ENCODE measurements at regions of chr2 and their contacts with region 1.

Region 1: DNA sequence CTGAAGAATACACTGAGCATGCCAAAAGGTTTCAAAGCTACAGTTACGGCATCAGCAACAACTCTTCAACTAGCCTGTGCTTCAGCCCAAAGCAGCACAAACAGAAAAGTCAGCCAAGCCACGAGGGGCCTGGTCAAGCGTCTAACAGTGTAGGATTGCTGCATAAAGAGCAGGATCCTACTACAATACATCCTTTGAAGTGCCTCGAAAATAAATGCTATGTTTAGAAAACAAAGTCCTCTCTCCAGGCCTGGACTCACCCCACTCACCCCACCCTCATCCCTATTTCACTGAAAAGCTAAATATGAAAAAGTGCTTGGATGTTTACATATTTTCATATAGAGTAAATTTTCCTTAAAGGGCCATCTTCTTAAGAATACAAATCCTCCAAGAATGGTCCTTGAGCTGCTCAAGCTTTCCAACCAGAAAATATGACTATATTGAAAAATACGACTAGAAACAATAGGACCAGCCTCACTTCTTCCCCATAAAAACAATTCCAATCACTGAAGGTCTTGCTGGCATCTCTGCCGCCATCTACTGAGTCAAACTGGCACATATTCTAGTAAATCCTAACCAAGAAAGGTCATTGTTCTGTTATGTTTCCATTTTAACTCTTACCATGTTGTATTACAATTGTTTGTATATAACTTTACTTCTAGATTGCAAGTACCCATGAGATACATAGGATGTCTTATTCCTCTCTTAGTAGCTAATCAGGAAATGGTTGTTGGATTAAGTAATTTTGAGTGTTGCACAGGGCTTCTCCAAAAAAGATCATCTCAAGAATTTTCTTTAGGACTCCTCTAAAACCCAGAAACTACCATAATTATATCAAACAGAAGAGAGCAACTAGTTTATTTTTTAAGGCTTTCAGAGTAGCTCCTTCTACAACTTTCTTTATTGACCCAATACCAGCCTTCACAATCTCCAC is 63.6 kb downstream of the CLHC1 start:
- DNase-seq: peak; percentile 69 to 77
- ATAC-seq: peak; percentile 81 to 84
- H3K4me3 ChIP-seq: no peak overlapping the region
- H3K27ac ChIP-seq: peak overlapping the region; percentile 12 to 59; a peak in 4 of 6 replicates
- H3K4me1 ChIP-seq: peaks cover 38% of the 10 kb centered on the region
- CTCF ChIP-seq: peak; percentile 98
- EP300 ChIP-seq: no peak
- POLR2A ChIP-seq: no peak
- RAD21 ChIP-seq: peak; percentile 98 to 99

Region 2: DNA sequence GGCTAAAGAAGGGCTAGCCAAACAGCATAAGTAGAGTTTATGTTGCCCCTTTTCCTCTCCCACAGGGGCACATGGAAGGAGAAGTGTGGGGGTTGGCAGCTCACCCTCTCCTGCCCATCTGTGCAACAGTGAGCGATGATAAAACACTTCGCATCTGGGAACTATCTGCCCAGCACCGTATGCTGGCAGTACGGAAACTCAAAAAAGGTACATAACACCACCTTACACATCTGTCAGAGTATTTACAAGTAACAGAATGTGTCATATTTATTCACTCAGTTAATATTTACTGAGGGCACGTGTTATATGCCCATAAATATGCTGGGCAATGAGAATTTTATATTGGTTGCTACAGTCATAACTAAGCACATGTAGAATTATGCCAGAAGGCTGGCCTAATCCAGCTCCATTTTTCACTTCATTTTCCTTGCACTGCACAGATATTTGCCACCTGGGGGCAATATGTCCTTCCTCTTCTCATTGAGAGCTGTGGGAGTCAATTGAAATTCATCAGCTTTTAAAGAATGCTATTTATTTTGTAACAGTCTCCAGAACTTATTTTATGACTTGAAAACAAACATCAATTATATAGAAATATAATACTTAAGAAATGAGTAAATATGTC is 268.8 kb before region 1 on chr2:
- CTCF ChIA-PET with region 1: interaction called, 236 read pairs
- POLR2A ChIA-PET with region 1: no interaction called
- DNase-seq: peak; percentile 35 to 58
- ATAC-seq: peak in 1 of 2 experiments; percentile 55; a peak in 3 of 6 replicates
- H3K4me3 ChIP-seq: no peak overlapping the region
- H3K27ac ChIP-seq: no peak overlapping the region
- H3K4me1 ChIP-seq: peaks cover 17% of the 10 kb centered on the region
- CTCF ChIP-seq: peak; percentile 75
- EP300 ChIP-seq: no peak
- POLR2A ChIP-seq: no peak
- RAD21 ChIP-seq: peak; percentile 90 to 93

Region 3: DNA sequence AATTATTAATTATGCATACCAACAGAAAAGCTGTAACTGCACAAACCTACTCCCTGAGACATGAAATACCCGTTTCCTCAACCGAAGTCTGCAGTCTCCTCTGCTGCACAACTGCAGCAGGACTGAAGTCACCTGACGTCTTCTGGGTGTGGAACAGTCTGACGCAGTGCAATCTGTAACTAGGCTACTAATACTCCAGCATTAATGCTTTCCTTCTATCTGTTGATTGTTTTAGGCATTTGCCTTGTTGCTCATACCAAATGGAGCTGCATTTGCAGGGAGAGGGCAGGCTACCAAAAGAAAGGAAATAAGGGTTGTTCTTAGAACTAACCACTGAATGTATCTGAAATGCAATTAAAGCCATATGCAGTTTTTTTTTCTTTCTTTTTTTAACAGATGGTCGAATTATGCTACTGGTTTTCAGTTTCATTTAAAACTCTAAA is 158.3 kb before region 1 on chr2:
- CTCF ChIA-PET with region 1: interaction called, 351 read pairs
- POLR2A ChIA-PET with region 1: interaction called, 3 read pairs
- DNase-seq: peak; percentile 26 to 67
- ATAC-seq: peak; percentile 76 to 81
- H3K4me3 ChIP-seq: peak overlapping the region; percentile 15; the same call in 2 of the 3 replicates
- H3K27ac ChIP-seq: peak overlapping the region; percentile 1 to 68; a peak in 4 of 6 replicates
- H3K4me1 ChIP-seq: peaks cover 94% of the 10 kb centered on the region
- CTCF ChIP-seq: no peak
- EP300 ChIP-seq: no peak
- POLR2A ChIP-seq: no peak
- RAD21 ChIP-seq: no peak

Region 4: GRCh38 chr2:55056024-55056521 is 112.4 kb before region 1 on chr2:
- CTCF ChIA-PET with region 1: interaction called, 198 read pairs
- POLR2A ChIA-PET with region 1: interaction called, 34 read pairs
- DNase-seq: peak; percentile 42 to 52
- ATAC-seq: peak in 1 of 2 experiments; percentile 60; a peak in 2 of 6 replicates
- H3K4me3 ChIP-seq: no peak overlapping the region
- H3K27ac ChIP-seq: peak overlapping the region; percentile 53 to 65; a peak in 5 of 6 replicates
- H3K4me1 ChIP-seq: peaks cover 26% of the 10 kb centered on the region
- CTCF ChIP-seq: no peak
- EP300 ChIP-seq: no peak
- POLR2A ChIP-seq: no peak
- RAD21 ChIP-seq: no peak

Region 5: GRCh38 chr2:55097461-55098410 is 70.8 kb before region 1 on chr2:
- CTCF ChIA-PET with region 1: interaction called, 12 read pairs
- POLR2A ChIA-PET with region 1: no interaction called
- DNase-seq: peak in 1 of 2 experiments; percentile 39
- ATAC-seq: peak; percentile 75 to 79
- H3K4me3 ChIP-seq: no peak overlapping the region
- H3K27ac ChIP-seq: peak overlapping the region; percentile 77 to 82
- H3K4me1 ChIP-seq: peaks cover 68% of the 10 kb centered on the region
- CTCF ChIP-seq: no peak
- EP300 ChIP-seq: 0 out of 5 replicates have a peak, but pooled peaks of 1 of the 2 experiments have one; percentile 20
- POLR2A ChIP-seq: no peak
- RAD21 ChIP-seq: no peak

Region 6: DNA sequence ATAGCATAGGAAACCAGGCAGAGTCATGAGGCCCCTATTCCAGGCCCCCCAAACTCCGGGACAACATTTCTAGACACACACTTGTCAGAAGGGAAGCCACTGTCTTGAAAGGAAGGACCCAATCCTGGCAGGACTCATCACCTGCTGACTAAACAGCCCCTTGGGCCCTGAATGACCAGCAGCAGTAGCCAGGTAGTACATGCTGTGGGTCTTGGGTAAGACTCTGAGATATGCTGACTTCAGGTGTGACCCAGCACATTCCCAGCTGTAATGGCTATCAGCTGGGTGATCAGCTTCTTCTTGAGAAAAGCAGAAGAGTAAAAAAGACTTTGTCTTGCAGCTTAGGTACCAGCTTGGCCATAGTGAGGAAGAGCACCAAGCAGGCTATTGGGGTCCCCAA is 28.0 kb after region 1 on chr2:
- CTCF ChIA-PET with region 1: interaction called, 18 read pairs
- POLR2A ChIA-PET with region 1: no interaction called
- DNase-seq: no peak
- ATAC-seq: no peak
- H3K4me3 ChIP-seq: no peak overlapping the region
- H3K27ac ChIP-seq: no peak overlapping the region
- H3K4me1 ChIP-seq: no peaks in the 10 kb centered on the region
- CTCF ChIP-seq: no peak
- EP300 ChIP-seq: no peak
- POLR2A ChIP-seq: no peak
- RAD21 ChIP-seq: no peak

Region 7: GRCh38 chr2:55252832-55253231 is 84.3 kb after region 1 on chr2:
- CTCF ChIA-PET with region 1: no interaction called
- POLR2A ChIA-PET with region 1: no interaction called
- DNase-seq: no peak
- ATAC-seq: no peak
- H3K4me3 ChIP-seq: no peak overlapping the region
- H3K27ac ChIP-seq: no peak overlapping the region
- H3K4me1 ChIP-seq: no peaks in the 10 kb centered on the region
- CTCF ChIP-seq: no peak
- EP300 ChIP-seq: no peak
- POLR2A ChIP-seq: no peak
- RAD21 ChIP-seq: no peak

Measured in A549 (cell line).